ENCODE measurements at regions of chr17 and their contacts with region 1.

Region 1: GRCh38 chr17:38729886-38730525 is at the start of gene CISD3:
- H3K4me3 ChIP-seq: peak within 1 kb of the TSS; percentile 67
- H3K27ac ChIP-seq: peak within 1 kb of the TSS; percentile 67
- H3K4me1 ChIP-seq: peaks cover 5% of the 10 kb centered on the region
- CTCF ChIP-seq: 0 out of 2 replicates have a peak, but pooled peaks have one; percentile 24

Region 2: GRCh38 chr17:38719289-38719942 is 10.6 kb before region 1 on chr17:
- CTCF ChIA-PET with region 1: interaction called, 18 read pairs
- POLR2A ChIA-PET with region 1: interaction called, 23 read pairs
- H3K4me3 ChIP-seq: no peak overlapping the region
- H3K27ac ChIP-seq: no peak overlapping the region
- H3K4me1 ChIP-seq: no peaks in the 10 kb centered on the region
- CTCF ChIP-seq: no peak

Region 3: DNA sequence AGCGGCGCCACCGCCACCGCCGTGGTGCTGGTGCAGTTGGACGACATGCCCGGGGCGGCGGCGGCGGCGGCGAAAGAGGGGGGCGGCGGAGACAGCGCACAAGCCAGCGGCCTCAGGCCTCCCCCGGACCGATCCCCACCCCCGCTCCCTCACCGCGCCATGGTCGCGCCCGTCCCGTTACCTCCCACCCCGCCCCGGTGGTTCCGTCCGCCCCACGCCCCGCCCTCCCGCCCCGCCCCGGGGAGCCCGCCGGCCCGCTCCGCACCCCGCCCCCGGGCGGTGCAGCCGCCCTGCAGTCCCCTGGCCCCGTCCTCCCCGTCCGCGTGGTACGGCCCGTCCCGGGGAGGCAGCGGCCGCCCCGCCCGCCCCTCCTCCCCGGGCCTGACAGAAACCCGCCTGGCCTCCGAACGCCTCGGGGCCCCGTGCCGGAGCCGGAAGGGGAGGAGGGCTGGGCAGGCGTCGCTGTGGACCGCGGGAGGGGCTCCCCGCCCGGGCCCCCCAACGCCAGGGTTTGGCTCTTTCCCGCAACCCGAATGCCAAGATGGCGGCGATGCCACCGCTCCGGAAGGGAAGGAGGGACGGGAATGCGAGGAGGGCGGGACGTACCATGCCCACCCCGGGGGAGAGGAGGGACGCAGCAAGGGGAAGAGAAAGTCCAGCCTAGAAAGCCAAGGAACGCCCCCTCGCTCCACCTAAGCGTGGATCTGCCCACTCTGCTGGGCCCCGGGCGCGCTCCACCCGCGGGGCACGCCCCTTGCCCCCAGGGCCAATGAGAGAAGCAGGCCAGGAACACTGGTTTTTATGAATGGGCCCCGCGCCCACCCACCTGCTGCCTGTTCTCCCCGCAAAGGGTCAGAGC is 69.6 kb after region 1 on chr17 and contains the start of gene PIP4K2B:
- CTCF ChIA-PET with region 1: no interaction called
- POLR2A ChIA-PET with region 1: no interaction called
- H3K4me3 ChIP-seq: peak within 1 kb of the TSS; percentile 83
- H3K27ac ChIP-seq: peak within 1 kb of the TSS; percentile 99
- H3K4me1 ChIP-seq: peaks cover 17% of the 10 kb centered on the region
- CTCF ChIP-seq: no peak; the same call in 1 of the 2 replicates

Measured in HEK293 (cell line).